Endothelial cell of umbilical vein (primary cell): ENCODE measurements at regions of chr7 and their contacts with region 1.

Region 1: GRCh38 chr7:47581806-47582763 is at the start of gene TNS3:
- DNase-seq: no peak
- H3K4me3 ChIP-seq: peak within 1 kb of the TSS; percentile 56 to 74 (median 69)
- H3K27ac ChIP-seq: no peak within 1 kb of the TSS
- H3K4me1 ChIP-seq: peaks cover 18% of the 10 kb centered on the region
- H3K27me3 ChIP-seq: peaks cover 6 to 8% of the 10 kb centered on the region in 2 experiments
- CTCF ChIP-seq: peak; percentile 7 to 17
- POLR2A ChIP-seq: no peak
- total RNA-seq, gene TNS3: 45.1 and 59.8 TPM in 2 replicates

Region 2: GRCh38 chr7:47482013-47482875 is 99.8 kb before region 1 on chr7:
- CTCF ChIA-PET with region 1: no interaction called
- POLR2A ChIA-PET with region 1: no interaction called
- dilution Hi-C with region 1: no loop called
- intact Hi-C with region 1: loop called (anchors 2 kb)
- DNase-seq: peak; percentile 83
- H3K4me3 ChIP-seq: no peak overlapping the region
- H3K27ac ChIP-seq: peak overlapping the region; percentile 89
- H3K4me1 ChIP-seq: peaks cover 16% of the 10 kb centered on the region
- H3K27me3 ChIP-seq: no peaks in the 10 kb centered on the region
- CTCF ChIP-seq: no peak
- POLR2A ChIP-seq: peak; percentile 49